ENCODE measurements at regions of chr11 and their contacts with region 1.

Region 1: GRCh38 chr11:9092853-9093778 is 1.7 kb upstream of the SCUBE2 start:
- DNase-seq: no peak
- H3K4me3 ChIP-seq: no peak overlapping the region
- H3K27ac ChIP-seq: no peak overlapping the region
- H3K4me1 ChIP-seq: peaks cover 1 to 4% (median 3%) of the 10 kb centered on the region in 4 experiments; a peak in 5 of 7 replicates
- H3K27me3 ChIP-seq: peaks cover 11 to 36% (median 30%) of the 10 kb centered on the region in 4 experiments
- CTCF ChIP-seq: peak in 2 of 3 experiments; percentile 8 to 10; a peak in 1 of 4 replicates
- EP300 ChIP-seq: no peak
- POLR2A ChIP-seq: no peak
- RAD21 ChIP-seq: no peak

Region 2: GRCh38 chr11:9060700-9061111 is 32.4 kb before region 1 on chr11:
- CTCF ChIA-PET with region 1: interaction called, 24 read pairs
- POLR2A ChIA-PET with region 1: no interaction called
- DNase-seq: no peak
- H3K4me3 ChIP-seq: no peak overlapping the region
- H3K27ac ChIP-seq: no peak overlapping the region
- H3K4me1 ChIP-seq: no peaks in the 10 kb centered on the region
- H3K27me3 ChIP-seq: no peaks in the 10 kb centered on the region
- CTCF ChIP-seq: peak; percentile 47 to 71 (median 61)
- EP300 ChIP-seq: no peak
- POLR2A ChIP-seq: no peak
- RAD21 ChIP-seq: peak; percentile 54 to 69

Region 3: GRCh38 chr11:9103208-9103898 is 10.2 kb after region 1 on chr11:
- CTCF ChIA-PET with region 1: interaction called, 32 read pairs
- POLR2A ChIA-PET with region 1: interaction called, 3 read pairs
- DNase-seq: no peak
- H3K4me3 ChIP-seq: no peak overlapping the region
- H3K27ac ChIP-seq: no peak overlapping the region
- H3K4me1 ChIP-seq: no peaks in the 10 kb centered on the region
- H3K27me3 ChIP-seq: no peaks in the 10 kb centered on the region
- CTCF ChIP-seq: no peak
- EP300 ChIP-seq: no peak
- POLR2A ChIP-seq: no peak
- RAD21 ChIP-seq: no peak

Region 4: GRCh38 chr11:9120664-9121485 is 27.8 kb after region 1 on chr11:
- CTCF ChIA-PET with region 1: interaction called, 103 read pairs
- POLR2A ChIA-PET with region 1: no interaction called
- DNase-seq: peak; percentile 36 to 78
- H3K4me3 ChIP-seq: 0 out of 8 replicates have a peak overlapping the region, but pooled peaks of 1 of the 4 experiments have one; percentile 10
- H3K27ac ChIP-seq: 0 out of 2 replicates have a peak overlapping the region, but pooled peaks have one; percentile 4
- H3K4me1 ChIP-seq: peaks cover 4 to 9% (median 5%) of the 10 kb centered on the region in 4 experiments; a peak in 5 of 7 replicates
- H3K27me3 ChIP-seq: no peaks in the 10 kb centered on the region
- CTCF ChIP-seq: peak; percentile 84 to 99 (median 84)
- EP300 ChIP-seq: no peak; a peak in 1 of 3 replicates
- POLR2A ChIP-seq: no peak
- RAD21 ChIP-seq: peak; percentile 48 to 68

Region 5: DNA sequence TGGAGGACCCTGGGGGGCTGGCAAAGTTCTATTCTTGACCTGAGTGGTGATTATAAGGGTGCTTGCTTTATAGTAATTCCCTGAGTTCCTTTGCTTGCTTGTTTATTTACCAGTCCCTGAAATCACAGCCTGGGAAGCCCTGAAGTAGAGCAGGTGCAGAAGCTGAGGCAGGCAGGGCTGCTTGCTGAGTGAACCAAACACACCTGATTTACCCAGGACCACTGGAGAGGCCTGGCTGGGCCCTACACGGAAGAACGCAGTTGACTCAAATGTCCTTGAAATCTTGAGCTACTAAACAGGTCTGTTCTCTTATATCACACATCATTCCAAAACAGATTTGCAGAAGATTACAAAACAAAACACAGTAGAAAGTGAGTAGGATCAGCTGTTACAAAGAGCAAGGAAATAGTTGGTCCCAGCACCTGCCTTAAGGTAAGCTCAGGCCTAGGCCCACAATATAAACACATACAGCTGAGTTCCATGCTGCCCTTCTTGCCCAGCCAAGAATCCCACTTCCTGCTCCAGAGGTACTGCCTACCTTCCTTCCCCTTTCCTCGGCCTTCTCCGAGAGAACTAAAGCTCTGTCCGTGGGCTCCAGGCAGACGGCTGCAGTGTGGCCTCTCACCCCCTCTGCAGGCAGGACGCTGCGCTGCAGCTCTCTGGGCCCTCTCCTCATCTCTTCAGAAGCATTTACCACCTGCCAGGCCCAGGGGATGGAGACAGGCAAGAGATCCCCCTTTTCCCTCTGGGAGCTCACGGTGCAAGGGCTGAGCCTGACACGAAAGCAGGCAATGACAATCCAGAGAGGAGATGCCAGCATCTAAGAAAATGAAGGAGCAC is 44.4 kb after region 1 on chr11:
- CTCF ChIA-PET with region 1: interaction called, 68 read pairs
- POLR2A ChIA-PET with region 1: no interaction called
- DNase-seq: peak; percentile 73 to 95
- H3K4me3 ChIP-seq: no peak overlapping the region
- H3K27ac ChIP-seq: no peak overlapping the region
- H3K4me1 ChIP-seq: peaks cover 0 to 12% (median 2%) of the 10 kb centered on the region in 4 experiments; a peak in 3 of 7 replicates
- H3K27me3 ChIP-seq: no peaks in the 10 kb centered on the region
- CTCF ChIP-seq: peak; percentile 94 to 99 (median 96)
- EP300 ChIP-seq: no peak
- POLR2A ChIP-seq: no peak
- RAD21 ChIP-seq: peak; percentile 93 to 95